ENCODE measurements at regions of chr7 and their contacts with region 1.

Region 1: GRCh38 chr7:25772802-25773201 is 379.2 kb upstream of the NFE2L3 start:
- DNase-seq: no peak
- ATAC-seq: no peak
- H3K4me3 ChIP-seq: no peak overlapping the region
- H3K27ac ChIP-seq: no peak overlapping the region
- H3K4me1 ChIP-seq: no peaks in the 10 kb centered on the region
- H3K27me3 ChIP-seq: no peaks in the 10 kb centered on the region

Region 2: DNA sequence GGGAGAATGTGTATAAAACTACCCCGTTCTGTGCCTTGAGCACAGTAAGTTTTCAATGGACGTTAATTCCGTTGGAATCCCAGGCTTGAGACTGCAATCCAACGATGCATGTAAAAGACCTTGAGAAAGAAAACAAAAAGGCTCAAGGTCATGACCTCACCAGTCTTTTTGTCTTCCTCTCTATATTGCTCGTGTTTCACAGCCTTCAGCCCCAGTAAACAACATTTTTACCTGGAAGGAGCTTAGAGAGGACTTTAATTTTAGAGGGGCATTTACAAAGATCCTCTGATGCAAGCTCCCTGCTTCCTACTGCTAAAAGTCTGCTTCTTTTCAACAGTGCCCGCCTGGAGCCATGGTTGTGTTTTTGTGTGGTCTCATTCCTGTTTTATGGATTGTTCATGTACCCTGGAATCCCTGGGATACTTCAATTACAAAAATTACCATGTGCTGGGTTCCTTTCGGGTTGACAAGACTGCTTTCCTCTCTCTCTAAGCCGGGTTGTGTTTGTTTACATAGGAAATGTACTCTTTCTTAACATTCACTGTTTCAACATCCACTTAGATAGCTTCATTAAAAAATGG is 59.1 kb after region 1 on chr7:
- intact Hi-C with region 1: loop called in 2 of 4 experiments (anchors 2 to 10 kb)
- DNase-seq: no peak
- ATAC-seq: peak in 1 of 2 donors; percentile 10
- H3K4me3 ChIP-seq: no peak overlapping the region
- H3K27ac ChIP-seq: peak overlapping the region; percentile 83
- H3K4me1 ChIP-seq: peaks cover 4% of the 10 kb centered on the region
- H3K27me3 ChIP-seq: no peaks in the 10 kb centered on the region